ENCODE measurements at regions of chr6 and their contacts with region 1.

Region 1: DNA sequence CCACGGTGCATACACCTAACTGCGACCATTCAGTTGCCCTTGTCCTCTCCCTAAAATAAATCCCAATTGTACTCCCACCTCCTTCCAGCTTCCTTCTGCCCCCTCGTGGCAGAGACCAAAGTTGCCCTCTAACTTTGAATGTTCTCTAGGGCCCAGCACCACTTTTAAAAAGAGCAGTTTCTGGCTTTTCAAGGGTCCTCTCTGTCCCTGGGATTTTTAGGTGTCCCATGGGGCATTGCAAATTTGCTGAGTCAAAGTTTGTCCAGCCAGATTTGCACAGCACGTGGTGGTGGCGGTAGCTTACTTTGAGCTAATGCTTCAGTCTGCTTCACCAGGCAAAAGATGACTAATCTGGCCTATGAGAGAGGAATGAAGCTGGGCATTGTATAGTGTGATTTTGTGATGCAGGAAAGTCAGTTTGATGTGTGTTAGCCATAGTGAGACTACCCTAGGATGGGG is 100.2 kb downstream of the PERP start:
- DNase-seq: peak; percentile 71
- ATAC-seq: peak; percentile 87
- H3K4me3 Mint-ChIP-seq: no peak overlapping the region
- H3K27ac Mint-ChIP-seq: no peak overlapping the region
- H3K4me1 Mint-ChIP-seq: peaks cover 28% of the 10 kb centered on the region
- H3K27me3 Mint-ChIP-seq: no peaks in the 10 kb centered on the region
- CTCF ChIP-seq: peak; percentile 51

Region 2: GRCh38 chr6:137697267-137697938 is 309.6 kb before region 1 on chr6:
- CTCF ChIA-PET with region 1: interaction called, 14 read pairs
- POLR2A ChIA-PET with region 1: no interaction called
- DNase-seq: peak; percentile 19
- ATAC-seq: peak; percentile 85
- H3K4me3 Mint-ChIP-seq: no peak overlapping the region
- H3K27ac Mint-ChIP-seq: peak overlapping the region; percentile 52; the same call in 1 of the 2 replicates
- H3K4me1 Mint-ChIP-seq: peaks cover 12% of the 10 kb centered on the region
- H3K27me3 Mint-ChIP-seq: no peaks in the 10 kb centered on the region
- CTCF ChIP-seq: no peak

Region 3: DNA sequence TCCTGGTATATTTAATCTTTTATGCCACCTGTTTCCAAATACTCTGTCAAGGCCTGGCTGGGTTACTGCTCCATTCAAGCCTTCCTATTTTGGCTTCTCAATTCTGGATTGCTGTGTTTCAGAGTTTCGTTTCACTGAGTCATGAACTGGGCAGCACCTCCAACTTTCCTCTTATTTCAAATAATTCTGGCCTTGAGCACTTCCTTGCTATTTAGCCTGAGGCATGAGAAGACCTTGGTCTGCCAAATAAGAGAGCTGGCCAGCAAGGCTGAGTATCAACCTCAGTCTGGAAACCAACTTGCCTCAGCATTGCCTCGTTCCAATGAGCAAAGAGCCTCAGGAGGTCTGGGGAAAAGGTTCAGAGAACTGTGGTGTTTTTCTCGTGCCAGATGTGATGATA is 73.3 kb before region 1 on chr6:
- CTCF ChIA-PET with region 1: no interaction called
- POLR2A ChIA-PET with region 1: no interaction called
- DNase-seq: no peak
- ATAC-seq: no peak
- H3K4me3 Mint-ChIP-seq: no peak overlapping the region
- H3K27ac Mint-ChIP-seq: no peak overlapping the region
- H3K4me1 Mint-ChIP-seq: no peaks in the 10 kb centered on the region
- H3K27me3 Mint-ChIP-seq: no peaks in the 10 kb centered on the region
- CTCF ChIP-seq: no peak

Region 4: DNA sequence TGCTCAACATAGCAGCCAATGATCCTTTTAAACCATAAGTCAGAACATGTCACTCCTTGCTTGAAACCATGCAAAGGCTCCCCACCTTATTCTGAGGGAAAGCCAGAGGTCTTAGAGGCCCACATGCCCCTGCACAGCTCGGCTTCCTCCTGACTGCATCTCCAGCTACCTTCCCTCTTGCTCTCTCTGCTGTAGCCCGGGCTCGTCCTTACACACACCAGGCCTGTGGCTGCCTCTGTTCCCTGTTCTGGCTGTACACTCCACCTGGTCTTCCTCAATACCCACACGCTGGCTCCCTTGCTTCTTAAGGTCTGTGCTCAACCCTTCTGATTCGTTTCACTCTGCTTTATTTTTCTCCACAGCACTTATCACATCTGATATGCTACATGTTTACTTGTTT is 23.8 kb before region 1 on chr6:
- CTCF ChIA-PET with region 1: no interaction called
- POLR2A ChIA-PET with region 1: no interaction called
- DNase-seq: no peak
- ATAC-seq: no peak
- H3K4me3 Mint-ChIP-seq: no peak overlapping the region
- H3K27ac Mint-ChIP-seq: no peak overlapping the region
- H3K4me1 Mint-ChIP-seq: no peaks in the 10 kb centered on the region
- H3K27me3 Mint-ChIP-seq: no peaks in the 10 kb centered on the region; the same call in 1 of the 2 replicates
- CTCF ChIP-seq: no peak

Region 5: DNA sequence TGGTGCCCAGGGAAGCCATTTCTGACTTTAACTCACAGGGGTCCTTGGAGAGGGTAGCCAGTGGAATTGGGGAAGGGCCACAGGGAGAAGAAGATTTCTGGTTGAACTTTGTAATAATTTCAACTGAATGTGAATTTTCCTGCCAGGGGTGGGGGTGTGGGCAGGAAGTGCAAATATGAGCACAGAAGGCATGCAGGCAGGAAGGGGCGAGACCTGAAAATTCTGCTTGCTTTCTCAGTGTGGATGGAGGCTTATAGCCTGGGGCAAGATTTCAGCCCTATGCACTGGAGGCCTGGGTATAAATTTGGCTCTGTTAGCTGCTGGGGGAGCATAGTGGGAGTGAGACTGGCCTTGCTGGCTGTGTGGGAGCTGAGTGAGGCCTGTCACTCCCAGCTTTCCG is 45.7 kb after region 1 on chr6:
- CTCF ChIA-PET with region 1: interaction called, 10 read pairs
- POLR2A ChIA-PET with region 1: no interaction called
- DNase-seq: no peak
- ATAC-seq: no peak
- H3K4me3 Mint-ChIP-seq: no peak overlapping the region
- H3K27ac Mint-ChIP-seq: no peak overlapping the region
- H3K4me1 Mint-ChIP-seq: peaks cover 1% of the 10 kb centered on the region; the same call in 1 of the 2 replicates
- H3K27me3 Mint-ChIP-seq: peaks cover 3% of the 10 kb centered on the region; the same call in 1 of the 2 replicates
- CTCF ChIP-seq: no peak

Region 6: GRCh38 chr6:138086573-138087196 is 79.6 kb after region 1 on chr6:
- CTCF ChIA-PET with region 1: interaction called, 15 read pairs
- POLR2A ChIA-PET with region 1: no interaction called
- DNase-seq: peak; percentile 17
- ATAC-seq: peak; percentile 97
- H3K4me3 Mint-ChIP-seq: no peak overlapping the region
- H3K27ac Mint-ChIP-seq: peak overlapping the region; percentile 64; the same call in 1 of the 2 replicates
- H3K4me1 Mint-ChIP-seq: peaks cover 24% of the 10 kb centered on the region
- H3K27me3 Mint-ChIP-seq: peaks cover 25% of the 10 kb centered on the region; the same call in 1 of the 2 replicates
- CTCF ChIP-seq: no peak

Region 7: GRCh38 chr6:138109042-138109997 is 102.3 kb after region 1 on chr6:
- CTCF ChIA-PET with region 1: interaction called, 30 read pairs
- POLR2A ChIA-PET with region 1: no interaction called
- DNase-seq: peak; percentile 74
- ATAC-seq: no peak
- H3K4me3 Mint-ChIP-seq: 0 out of 2 replicates have a peak overlapping the region, but pooled peaks have one; percentile 23
- H3K27ac Mint-ChIP-seq: no peak overlapping the region
- H3K4me1 Mint-ChIP-seq: peaks cover 20% of the 10 kb centered on the region
- H3K27me3 Mint-ChIP-seq: peaks cover 6% of the 10 kb centered on the region
- CTCF ChIP-seq: peak; percentile 88

Measured in WTC11 (cell line).